ENCODE measurements at regions of chr19 and their contacts with region 1.

Region 1: DNA sequence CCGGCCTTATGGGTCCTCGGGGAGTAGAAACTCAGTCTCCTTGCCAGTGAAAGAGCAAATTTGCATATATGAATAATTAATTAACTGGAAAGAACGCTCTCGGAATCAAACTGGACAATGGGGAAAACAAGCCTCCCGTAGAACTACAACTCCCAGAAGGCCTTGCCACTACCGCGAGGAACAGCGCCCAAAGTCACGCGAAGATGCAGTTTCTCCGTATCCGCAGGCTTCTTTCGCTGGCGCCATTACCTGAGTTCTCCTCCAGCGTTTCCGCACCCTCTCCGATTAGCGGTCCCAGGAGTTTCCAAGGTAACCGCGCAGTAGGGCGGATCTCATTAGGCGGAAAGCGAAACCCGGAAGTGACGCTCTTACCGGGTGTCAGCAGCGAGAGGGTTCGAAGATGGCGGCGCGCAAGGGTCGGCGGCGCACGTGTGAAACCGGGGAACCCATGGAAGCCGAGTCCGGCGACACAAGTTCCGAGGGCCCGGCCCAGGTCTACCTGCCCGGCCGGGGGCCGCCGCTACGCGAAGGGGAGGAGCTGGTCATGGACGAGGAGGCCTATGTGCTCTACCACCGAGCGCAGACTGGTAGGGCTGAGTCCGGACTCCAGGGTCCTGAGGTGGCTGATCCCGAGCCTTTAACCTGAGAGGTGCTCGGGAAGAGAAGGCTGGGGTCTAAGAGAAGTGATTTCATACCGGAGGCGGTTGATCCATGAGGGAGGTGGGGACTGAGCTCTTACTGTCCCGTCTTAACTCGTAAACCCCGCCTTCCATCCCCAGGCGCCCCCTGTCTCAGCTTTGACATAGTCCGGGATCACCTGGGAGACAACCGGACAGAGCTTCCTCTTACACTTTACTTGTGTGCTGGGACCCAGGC is at the start of gene GRWD1:
- DNase-seq: peak; percentile 63
- H3K4me3 ChIP-seq: peak within 1 kb of the TSS; percentile 90
- CTCF ChIP-seq: no peak

Region 2: GRCh38 chr19:48398375-48399235 is 47.2 kb before region 1 on chr19:
- CTCF ChIA-PET with region 1: interaction called, 10 read pairs
- POLR2A ChIA-PET with region 1: no interaction called
- DNase-seq: no peak
- H3K4me3 ChIP-seq: peak overlapping the region; percentile 59
- CTCF ChIP-seq: no peak

Region 3: DNA sequence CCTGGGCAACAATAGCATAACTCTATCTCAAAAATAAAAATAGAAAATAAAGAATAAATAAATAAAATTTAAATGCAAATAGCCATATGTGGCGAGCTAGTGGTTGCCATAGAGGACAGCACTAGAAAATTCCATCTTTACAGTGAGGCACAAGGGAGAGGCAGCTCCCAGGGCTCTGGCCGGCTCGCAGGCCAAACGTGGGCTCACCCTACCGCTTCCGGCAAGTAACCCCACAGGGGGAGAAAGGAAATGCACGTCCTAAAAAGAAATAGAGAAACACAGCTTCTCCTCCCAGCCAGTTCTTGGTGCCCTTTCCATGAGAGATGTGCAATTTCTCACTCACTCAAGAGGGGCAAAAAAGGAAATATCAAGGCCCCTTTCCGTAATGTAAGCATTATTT is 12.5 kb before region 1 on chr19:
- CTCF ChIA-PET with region 1: interaction called, 18 read pairs
- POLR2A ChIA-PET with region 1: no interaction called
- DNase-seq: no peak
- H3K4me3 ChIP-seq: no peak overlapping the region
- CTCF ChIP-seq: no peak

Region 4: DNA sequence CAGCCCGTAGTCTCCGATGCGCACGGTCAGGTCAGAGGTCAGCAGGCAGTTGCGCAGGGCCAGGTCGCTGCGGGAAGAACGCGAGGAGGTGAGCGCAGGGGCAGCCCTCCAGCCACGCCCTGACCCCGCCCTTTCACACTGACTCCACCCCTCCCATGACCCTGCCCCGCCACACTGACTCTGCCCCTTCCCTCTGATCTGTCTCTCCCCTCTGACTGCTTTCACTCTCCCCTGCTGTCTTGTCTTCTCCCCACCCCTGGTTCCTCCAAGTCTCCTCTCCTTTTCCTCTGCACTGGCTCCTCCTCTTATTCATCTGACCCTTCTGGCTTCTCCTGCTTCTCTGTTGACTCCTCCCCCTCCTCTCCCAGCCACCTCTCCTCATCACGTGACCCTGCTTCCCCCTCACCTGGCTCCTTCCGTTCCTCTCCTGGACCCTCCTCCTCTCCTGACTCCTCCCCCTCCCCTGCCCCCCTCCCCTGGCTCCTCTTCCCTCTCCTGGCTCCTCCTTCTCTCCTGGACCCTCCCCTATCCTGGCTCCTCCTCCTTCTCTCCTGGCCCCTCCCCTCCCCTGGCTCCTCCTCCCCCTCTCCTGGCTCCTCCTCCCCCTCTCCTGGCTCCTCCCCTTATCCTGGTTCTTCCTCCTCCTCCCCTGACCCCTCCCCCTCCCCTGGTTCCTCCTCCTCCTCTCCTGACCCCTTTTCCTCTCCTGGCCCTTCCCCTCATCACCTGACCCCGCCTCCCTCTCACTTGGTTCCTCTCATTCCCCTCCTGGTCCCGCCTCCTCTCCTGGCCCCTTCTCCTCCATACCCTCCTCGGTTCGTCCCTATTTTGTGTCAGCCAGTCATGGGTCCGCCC is 55.9 kb after region 1 on chr19:
- CTCF ChIA-PET with region 1: no interaction called
- POLR2A ChIA-PET with region 1: no interaction called
- DNase-seq: no peak
- H3K4me3 ChIP-seq: no peak overlapping the region
- CTCF ChIP-seq: no peak

Region 5: GRCh38 chr19:48530066-48530720 is 84.3 kb after region 1 on chr19:
- CTCF ChIA-PET with region 1: no interaction called
- POLR2A ChIA-PET with region 1: no interaction called
- DNase-seq: no peak
- H3K4me3 ChIP-seq: no peak overlapping the region
- CTCF ChIP-seq: no peak